ENCODE measurements at regions of chr6 and their contacts with region 1.

Region 1: GRCh38 chr6:161273752-161274487 is at the start of gene AGPAT4:
- DNase-seq: peak; percentile 72 to 76
- H3K4me3 ChIP-seq: peak within 1 kb of the TSS; percentile 74 to 91 (median 82)
- H3K27ac ChIP-seq: peak within 1 kb of the TSS; percentile 92
- H3K4me1 ChIP-seq: peaks cover 0 to 14% (median 5%) of the 10 kb centered on the region in 4 experiments; a peak in 5 of 7 replicates
- H3K27me3 ChIP-seq: no peaks in the 10 kb centered on the region
- CTCF ChIP-seq: no peak
- EP300 ChIP-seq: no peak
- POLR2A ChIP-seq: peak; percentile 60 to 89
- RAD21 ChIP-seq: no peak
- total RNA-seq, gene AGPAT4: 21.9 and 23.8 TPM in 2 replicates

Region 2: GRCh38 chr6:161242779-161243693 is 30.9 kb before region 1 on chr6:
- CTCF ChIA-PET with region 1: interaction called, 14 read pairs
- POLR2A ChIA-PET with region 1: interaction called, 13 read pairs
- DNase-seq: peak; percentile 57 to 79
- H3K4me3 ChIP-seq: peak overlapping the region in 1 of 4 experiments; percentile 11; a peak in 2 of 8 replicates
- H3K27ac ChIP-seq: no peak overlapping the region
- H3K4me1 ChIP-seq: peaks cover 2 to 21% (median 7%) of the 10 kb centered on the region in 4 experiments; a peak in 5 of 7 replicates
- H3K27me3 ChIP-seq: no peaks in the 10 kb centered on the region
- CTCF ChIP-seq: peak in 2 of 3 experiments; percentile 9 to 31; a peak in 2 of 4 replicates
- EP300 ChIP-seq: no peak
- POLR2A ChIP-seq: no peak
- RAD21 ChIP-seq: peak in 1 of 2 experiments; percentile 19; a peak in 2 of 4 replicates

Region 3: DNA sequence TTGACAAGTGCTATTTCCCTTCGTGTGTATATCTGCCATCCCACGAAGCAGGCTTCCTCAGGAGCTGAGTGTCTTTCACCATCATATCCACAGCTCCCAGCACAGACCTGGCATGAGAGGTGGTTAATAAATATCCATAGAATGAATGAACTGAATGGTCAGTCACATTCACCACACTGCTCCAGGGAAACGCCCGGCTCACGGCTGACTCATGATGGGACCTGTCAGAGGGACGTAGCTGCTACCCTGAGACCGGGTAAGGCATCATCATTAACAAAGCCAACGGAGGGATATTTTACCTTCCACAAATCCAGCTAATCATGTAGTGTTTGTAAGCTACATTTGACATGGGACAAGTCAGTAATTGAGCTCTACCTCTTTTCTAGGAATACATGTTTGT is 12.6 kb before region 1 on chr6:
- CTCF ChIA-PET with region 1: interaction called, 6 read pairs
- POLR2A ChIA-PET with region 1: interaction called, 39 read pairs
- DNase-seq: no peak
- H3K4me3 ChIP-seq: no peak overlapping the region
- H3K27ac ChIP-seq: no peak overlapping the region
- H3K4me1 ChIP-seq: peaks cover 2 to 13% (median 5%) of the 10 kb centered on the region in 4 experiments; a peak in 5 of 7 replicates
- H3K27me3 ChIP-seq: no peaks in the 10 kb centered on the region
- CTCF ChIP-seq: no peak
- EP300 ChIP-seq: no peak
- POLR2A ChIP-seq: no peak
- RAD21 ChIP-seq: no peak

Region 4: DNA sequence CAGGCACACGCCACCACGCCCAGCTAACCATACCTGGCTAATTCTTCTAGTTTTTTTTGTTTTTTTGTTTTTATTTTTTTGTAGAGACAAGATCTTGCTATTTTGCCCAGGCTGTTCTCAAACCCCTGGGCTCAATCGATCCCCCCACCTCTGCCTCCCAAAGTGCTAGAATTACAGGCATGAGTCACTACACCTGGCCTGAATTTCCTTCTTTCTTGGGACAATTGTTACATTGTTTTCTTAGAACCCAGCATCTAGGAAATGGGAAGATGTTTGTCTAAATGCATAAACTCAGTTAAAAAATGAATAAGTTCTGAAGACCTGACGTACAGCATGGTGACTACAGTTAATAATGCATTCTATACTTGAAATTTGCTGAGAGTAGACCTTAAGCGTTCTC is 10.7 kb after region 1 on chr6:
- CTCF ChIA-PET with region 1: interaction called, 4 read pairs
- POLR2A ChIA-PET with region 1: interaction called, 33 read pairs
- DNase-seq: no peak
- H3K4me3 ChIP-seq: no peak overlapping the region
- H3K27ac ChIP-seq: no peak overlapping the region
- H3K4me1 ChIP-seq: no peaks in the 10 kb centered on the region
- H3K27me3 ChIP-seq: no peaks in the 10 kb centered on the region
- CTCF ChIP-seq: no peak
- EP300 ChIP-seq: no peak
- POLR2A ChIP-seq: no peak
- RAD21 ChIP-seq: no peak

Region 5: GRCh38 chr6:161292145-161292544 is 18.2 kb after region 1 on chr6:
- CTCF ChIA-PET with region 1: interaction called, 3 read pairs
- POLR2A ChIA-PET with region 1: interaction called, 33 read pairs
- DNase-seq: peak in 1 of 2 experiments; percentile 44
- H3K4me3 ChIP-seq: peak overlapping the region in 1 of 4 experiments; percentile 29; a peak in 1 of 8 replicates
- H3K27ac ChIP-seq: no peak overlapping the region
- H3K4me1 ChIP-seq: peaks cover 5 to 14% (median 11%) of the 10 kb centered on the region in 4 experiments
- H3K27me3 ChIP-seq: no peaks in the 10 kb centered on the region
- CTCF ChIP-seq: no peak
- EP300 ChIP-seq: no peak
- POLR2A ChIP-seq: no peak
- RAD21 ChIP-seq: no peak

Region 6: DNA sequence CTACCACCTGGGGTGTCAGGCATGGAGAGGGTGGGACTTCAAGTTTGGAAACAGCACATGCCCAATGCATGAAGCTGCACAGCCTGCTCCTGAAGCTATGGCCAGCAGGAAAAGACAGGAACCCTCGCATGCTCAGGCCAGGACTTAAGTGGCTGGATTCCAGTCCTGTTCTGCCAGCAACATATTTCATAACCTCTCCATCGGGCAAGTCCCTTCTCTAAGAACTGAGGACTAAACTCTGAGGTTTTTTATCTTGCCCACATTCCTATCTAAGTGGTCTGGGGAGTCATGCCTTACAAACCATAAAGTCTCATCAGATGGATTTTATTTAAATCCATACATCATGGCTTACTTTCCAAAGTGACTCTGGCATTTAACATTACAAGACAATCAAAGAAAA is 27.4 kb after region 1 on chr6:
- CTCF ChIA-PET with region 1: no interaction called
- POLR2A ChIA-PET with region 1: interaction called, 11 read pairs
- DNase-seq: no peak
- H3K4me3 ChIP-seq: no peak overlapping the region
- H3K27ac ChIP-seq: no peak overlapping the region
- H3K4me1 ChIP-seq: peaks cover 0 to 2% (median 0%) of the 10 kb centered on the region in 4 experiments; a peak in 2 of 7 replicates
- H3K27me3 ChIP-seq: no peaks in the 10 kb centered on the region
- CTCF ChIP-seq: no peak
- EP300 ChIP-seq: no peak
- POLR2A ChIP-seq: no peak
- RAD21 ChIP-seq: no peak

Region 7: DNA sequence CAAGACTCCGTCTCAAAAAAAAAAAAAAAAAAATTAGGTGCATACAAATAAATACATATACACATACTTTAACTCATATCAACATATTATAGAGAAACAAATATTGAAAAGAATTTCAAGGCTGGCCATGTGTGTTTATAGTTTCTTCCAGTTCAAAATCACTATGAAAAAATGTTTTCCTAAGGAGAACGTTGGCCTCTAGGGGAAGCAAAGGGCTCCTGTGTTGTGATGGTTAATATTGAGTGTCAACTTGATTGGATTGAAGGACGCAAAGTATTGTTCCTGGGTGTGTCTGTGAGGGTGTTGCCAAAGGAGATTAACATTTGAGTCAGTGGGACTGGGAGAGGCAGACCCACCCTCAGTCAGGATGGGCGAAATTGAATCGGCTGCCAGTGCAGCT is 181.9 kb after region 1 on chr6:
- CTCF ChIA-PET with region 1: no interaction called
- POLR2A ChIA-PET with region 1: no interaction called
- DNase-seq: no peak
- H3K4me3 ChIP-seq: no peak overlapping the region
- H3K27ac ChIP-seq: no peak overlapping the region
- H3K4me1 ChIP-seq: no peaks in the 10 kb centered on the region
- H3K27me3 ChIP-seq: no peaks in the 10 kb centered on the region
- CTCF ChIP-seq: peak in 1 of 3 experiments; percentile 19; a peak in 1 of 4 replicates
- EP300 ChIP-seq: no peak
- POLR2A ChIP-seq: no peak
- RAD21 ChIP-seq: no peak

Measured in H1 (cell line).